ENCODE measurements at regions of chr6 and their contacts with region 1.

Region 1: DNA sequence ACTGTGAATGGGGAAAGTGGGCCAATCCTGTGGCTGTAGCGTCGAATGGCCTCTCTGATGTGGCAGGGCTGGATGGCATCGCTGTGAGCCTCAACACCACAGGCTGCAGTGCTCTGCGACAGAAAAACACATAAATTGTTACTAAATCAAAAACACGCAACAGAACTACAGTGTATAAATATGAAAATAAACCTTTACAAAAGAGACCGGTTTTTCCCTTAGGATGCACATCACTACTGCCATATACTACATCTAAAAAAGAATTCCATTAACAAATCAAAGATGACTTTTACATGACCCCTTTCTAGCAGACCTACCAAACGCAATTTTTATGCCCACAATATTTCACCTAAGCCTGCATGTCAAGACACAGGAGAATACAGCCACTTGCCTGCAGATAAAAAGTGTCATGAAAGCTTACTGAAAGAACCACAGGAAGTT is 395.5 kb upstream of the RUNX2 start:
- DNase-seq: peak; percentile 4 to 86 (median 40)
- ATAC-seq: peak; percentile 77
- H3K4me3 ChIP-seq: peak overlapping the region; percentile 42
- H3K4me3 Mint-ChIP-seq: peak overlapping the region; percentile 89
- H3K27ac ChIP-seq: peak overlapping the region; percentile 63 to 64
- H3K27ac Mint-ChIP-seq: peak overlapping the region; percentile 95
- H3K4me1 ChIP-seq: peaks cover 19% of the 10 kb centered on the region
- H3K4me1 Mint-ChIP-seq: peaks cover 65% of the 10 kb centered on the region
- H3K27me3 ChIP-seq: no peaks in the 10 kb centered on the region
- H3K27me3 Mint-ChIP-seq: no peaks in the 10 kb centered on the region
- CTCF ChIP-seq: no peak

Region 2: DNA sequence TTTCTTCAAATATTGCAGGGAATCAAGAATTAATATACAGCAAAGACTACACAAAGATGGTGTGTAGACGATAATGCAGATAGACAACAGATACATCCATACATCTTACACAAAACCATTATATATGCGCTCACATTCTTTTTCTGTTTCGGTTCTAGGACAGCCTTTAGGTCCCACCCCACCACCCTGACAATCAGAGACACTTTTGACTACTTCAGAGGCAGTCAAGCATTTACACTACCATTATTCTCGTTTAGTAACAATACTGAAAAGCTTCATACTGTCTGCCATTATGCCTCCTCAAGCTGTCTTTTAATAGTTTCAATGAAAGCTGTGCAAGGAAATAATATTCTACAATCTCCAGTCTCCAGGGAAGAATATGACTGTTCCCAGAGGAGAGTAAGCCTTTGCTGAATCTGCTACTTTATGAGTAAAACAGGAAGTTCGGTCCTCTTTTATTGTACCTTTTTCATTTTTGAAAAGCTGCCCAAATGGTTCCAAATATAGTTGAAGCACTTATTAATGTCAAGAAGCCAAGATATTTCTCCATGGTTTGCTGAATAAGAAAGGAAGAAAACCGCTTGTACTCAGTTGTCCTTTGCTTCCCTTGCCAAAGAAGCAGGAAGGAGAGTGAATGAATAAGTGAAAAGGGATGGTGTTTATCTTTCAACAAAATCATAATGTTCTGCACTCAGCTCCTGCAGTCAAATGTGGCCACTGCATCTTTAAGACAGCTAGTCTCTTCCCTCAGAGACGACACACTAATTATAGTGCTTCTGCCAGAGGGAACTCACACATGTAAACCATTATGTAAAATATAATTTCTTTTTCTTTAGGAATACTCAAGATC is 76.9 kb before region 1 on chr6:
- CTCF ChIA-PET with region 1: no interaction called
- POLR2A ChIA-PET with region 1: no interaction called
- intact Hi-C with region 1: loop called in 1 of 2 experiments (anchors 10 kb)
- DNase-seq: no peak
- ATAC-seq: no peak
- H3K4me3 ChIP-seq: no peak overlapping the region
- H3K4me3 Mint-ChIP-seq: no peak overlapping the region
- H3K27ac ChIP-seq: no peak overlapping the region
- H3K27ac Mint-ChIP-seq: no peak overlapping the region
- H3K4me1 ChIP-seq: peaks cover 2% of the 10 kb centered on the region
- H3K4me1 Mint-ChIP-seq: peaks cover 60% of the 10 kb centered on the region
- H3K27me3 ChIP-seq: no peaks in the 10 kb centered on the region
- H3K27me3 Mint-ChIP-seq: no peaks in the 10 kb centered on the region
- CTCF ChIP-seq: no peak

Region 3: DNA sequence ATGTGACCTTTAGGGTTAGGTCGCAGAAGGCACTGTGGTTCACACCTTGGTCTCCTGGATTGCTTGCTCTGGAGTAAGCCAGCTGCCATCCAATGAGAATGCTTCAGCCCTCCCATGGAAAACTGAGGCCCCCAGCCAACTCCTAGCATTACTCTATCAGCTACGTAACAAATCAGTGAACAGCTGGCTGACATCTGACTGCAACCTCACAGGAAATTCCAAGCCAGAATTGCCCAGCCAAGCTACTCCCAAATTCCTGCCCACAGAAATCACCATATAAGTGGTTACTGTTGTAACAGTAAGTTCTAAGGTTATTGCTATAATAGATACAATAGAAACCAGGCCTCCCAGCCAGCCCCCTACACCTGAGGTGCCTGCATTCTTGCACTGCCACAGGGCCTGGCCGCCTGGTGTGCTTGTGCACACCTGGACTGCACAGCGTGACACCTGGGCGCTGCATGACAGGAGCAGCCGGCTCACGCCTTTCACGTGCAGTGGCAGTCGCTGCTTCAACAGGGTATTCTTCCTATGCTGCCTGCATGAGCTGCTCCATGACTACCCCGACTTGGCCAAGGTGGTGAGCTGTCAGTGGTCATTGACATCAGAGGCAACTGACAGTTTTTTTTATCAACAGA is 34.3 kb before region 1 on chr6:
- CTCF ChIA-PET with region 1: no interaction called
- POLR2A ChIA-PET with region 1: no interaction called
- intact Hi-C with region 1: no loop called
- DNase-seq: no peak
- ATAC-seq: no peak
- H3K4me3 ChIP-seq: no peak overlapping the region
- H3K4me3 Mint-ChIP-seq: no peak overlapping the region
- H3K27ac ChIP-seq: no peak overlapping the region
- H3K27ac Mint-ChIP-seq: no peak overlapping the region
- H3K4me1 ChIP-seq: no peaks in the 10 kb centered on the region
- H3K4me1 Mint-ChIP-seq: no peaks in the 10 kb centered on the region
- H3K27me3 ChIP-seq: no peaks in the 10 kb centered on the region
- H3K27me3 Mint-ChIP-seq: no peaks in the 10 kb centered on the region
- CTCF ChIP-seq: no peak

Region 4: DNA sequence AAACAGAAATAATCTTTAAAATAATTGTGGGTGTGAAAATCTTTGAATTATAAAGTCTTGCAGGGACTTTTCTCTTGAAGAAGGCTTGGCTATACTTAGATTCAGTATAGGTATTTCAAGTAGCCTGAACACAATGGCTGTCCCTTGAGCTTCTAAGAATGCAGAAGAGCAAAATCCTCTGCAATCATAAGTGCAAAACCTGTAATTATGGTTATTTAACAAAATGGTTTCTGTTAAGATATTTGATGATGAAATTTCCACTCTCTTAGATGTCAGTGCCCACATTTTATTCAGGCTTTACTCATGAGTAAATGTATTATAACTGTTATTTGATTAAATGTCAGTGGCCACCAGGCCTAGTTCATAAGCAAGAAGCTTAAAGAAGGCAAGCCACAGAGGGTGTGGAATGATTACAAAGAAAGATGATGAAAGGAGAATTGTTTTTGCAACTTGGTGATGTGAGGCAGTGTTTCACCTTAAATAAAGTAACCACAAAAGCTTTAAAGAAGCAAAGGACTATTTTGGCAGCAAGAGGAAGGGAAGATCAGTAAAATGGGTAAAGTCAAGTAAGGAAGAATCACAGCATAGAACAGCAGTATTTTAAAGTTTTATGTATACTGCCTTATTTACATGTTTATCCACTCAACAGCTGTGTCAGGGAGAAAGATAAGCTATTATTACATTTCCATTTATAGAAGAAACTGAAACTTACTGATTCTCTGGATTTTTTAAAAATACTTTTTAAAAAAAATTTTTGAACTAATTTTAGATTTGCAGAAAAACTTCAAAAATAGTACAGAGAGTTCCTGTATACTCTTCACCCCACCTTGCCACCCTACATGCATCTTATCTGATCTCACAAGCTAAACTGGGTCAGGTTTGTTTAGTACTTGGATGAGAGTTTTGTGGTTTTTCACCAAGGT is 44.3 kb after region 1 on chr6:
- CTCF ChIA-PET with region 1: no interaction called
- POLR2A ChIA-PET with region 1: interaction called, 26 read pairs
- intact Hi-C with region 1: loop called (anchors 2 to 5 kb)
- DNase-seq: peak in 5 of 14 experiments; percentile 10 to 78 (median 65)
- ATAC-seq: peak; percentile 90
- H3K4me3 ChIP-seq: no peak overlapping the region
- H3K4me3 Mint-ChIP-seq: peak overlapping the region; percentile 43
- H3K27ac ChIP-seq: peak overlapping the region in 1 of 2 donors; percentile 47
- H3K27ac Mint-ChIP-seq: peak overlapping the region; percentile 77
- H3K4me1 ChIP-seq: peaks cover 6% of the 10 kb centered on the region
- H3K4me1 Mint-ChIP-seq: peaks cover 78% of the 10 kb centered on the region
- H3K27me3 ChIP-seq: no peaks in the 10 kb centered on the region
- H3K27me3 Mint-ChIP-seq: no peaks in the 10 kb centered on the region
- CTCF ChIP-seq: no peak

Measured in CD4-positive, alpha-beta T cell (primary cell).